Lower lobe of right lung (tissue), 2 donors: ENCODE measurements at regions of chr18 and their contacts with region 1.

Region 1: GRCh38 chr18:47858607-47859006 is 71.9 kb downstream of the SMAD2 start:
- DNase-seq: no peak
- ATAC-seq: no peak
- H3K4me3 ChIP-seq: no peak overlapping the region
- H3K27ac ChIP-seq: no peak overlapping the region
- H3K4me1 ChIP-seq: no peaks in the 10 kb centered on the region
- H3K27me3 ChIP-seq: no peaks in the 10 kb centered on the region
- CTCF ChIP-seq: no peak

Region 2: GRCh38 chr18:47883771-47884413 is 25.3 kb after region 1 on chr18:
- intact Hi-C with region 1: loop called (anchors 2 kb)
- DNase-seq: no peak
- ATAC-seq: peak in 1 of 2 donors; percentile 32
- H3K4me3 ChIP-seq: no peak overlapping the region
- H3K27ac ChIP-seq: no peak overlapping the region
- H3K4me1 ChIP-seq: peaks cover 16% of the 10 kb centered on the region
- H3K27me3 ChIP-seq: no peaks in the 10 kb centered on the region
- CTCF ChIP-seq: no peak

Region 3: DNA sequence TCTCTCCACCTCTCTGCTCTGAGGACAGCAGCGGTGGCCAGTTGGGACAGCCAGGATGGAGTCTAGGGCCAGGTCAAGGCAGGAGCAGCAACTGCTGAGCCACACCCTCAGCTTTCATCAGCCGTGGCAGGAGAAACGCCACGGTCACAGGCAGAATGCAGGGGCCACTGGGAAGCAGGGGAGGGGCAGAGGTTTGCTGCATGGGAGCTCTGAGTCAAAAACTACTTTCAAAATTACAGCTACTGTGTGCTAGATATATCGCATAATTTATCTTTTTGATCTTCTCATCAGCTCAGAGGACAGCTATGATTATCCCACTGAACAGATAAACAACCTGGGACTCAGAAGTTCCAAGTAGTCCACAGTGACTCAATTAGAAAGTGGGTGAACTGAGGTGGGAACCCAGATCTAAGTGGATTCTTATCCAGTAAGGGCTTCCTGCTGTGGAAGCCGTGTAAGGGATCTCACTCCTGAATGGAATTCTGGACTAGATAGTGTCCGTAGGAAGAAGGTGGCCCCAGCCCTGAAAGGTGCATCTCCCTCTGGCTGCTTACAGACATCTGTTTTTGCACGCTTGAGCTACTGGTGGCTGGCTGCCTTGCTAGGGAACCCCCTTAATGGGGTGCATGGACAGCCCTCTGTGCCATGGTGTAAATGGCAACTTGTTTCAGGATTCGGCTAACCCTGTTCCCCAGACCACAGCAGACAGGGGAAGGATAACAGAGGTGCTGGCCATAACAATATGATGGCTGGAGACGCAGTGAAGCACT is 266.4 kb after region 1 on chr18:
- intact Hi-C with region 1: no loop called
- DNase-seq: no peak
- ATAC-seq: no peak
- H3K4me3 ChIP-seq: no peak overlapping the region
- H3K27ac ChIP-seq: no peak overlapping the region
- H3K4me1 ChIP-seq: peaks cover 10% of the 10 kb centered on the region
- H3K27me3 ChIP-seq: no peaks in the 10 kb centered on the region
- CTCF ChIP-seq: no peak